AG04450 (cell line): ENCODE measurements at regions of chr7 and their contacts with region 1.

Region 1: DNA sequence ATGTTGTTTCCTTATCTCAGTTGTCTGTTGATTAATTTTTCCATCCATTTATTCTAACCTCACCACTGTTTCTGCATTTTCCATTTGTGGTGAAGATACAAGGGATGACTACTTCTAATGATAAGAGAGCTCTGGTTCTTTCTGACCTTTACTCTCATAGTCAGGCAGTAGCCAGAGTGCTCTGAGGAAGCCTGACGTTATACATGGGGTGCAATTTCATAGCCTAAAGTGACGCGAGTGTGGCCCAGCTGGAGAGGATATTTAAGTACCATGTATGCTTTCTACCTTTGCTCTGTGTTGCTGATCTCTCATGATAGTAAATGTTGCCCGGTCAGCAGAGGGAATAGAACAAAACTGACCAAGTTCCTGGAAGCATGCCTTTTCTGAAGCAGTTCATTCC is 33.9 kb upstream of the CYCS start:
- DNase-seq: no peak
- H3K4me3 ChIP-seq: no peak overlapping the region
- H3K27ac ChIP-seq: no peak overlapping the region
- H3K27me3 ChIP-seq: no peaks in the 10 kb centered on the region
- CTCF ChIP-seq: no peak

Region 2: GRCh38 chr7:25171071-25171470 is 12.1 kb after region 1 on chr7:
- CTCF ChIA-PET with region 1: interaction called, 20 read pairs
- POLR2A ChIA-PET with region 1: no interaction called
- DNase-seq: no peak
- H3K4me3 ChIP-seq: no peak overlapping the region
- H3K27ac ChIP-seq: no peak overlapping the region
- H3K27me3 ChIP-seq: no peaks in the 10 kb centered on the region
- CTCF ChIP-seq: no peak